ENCODE measurements at regions of chr20 and their contacts with region 1.

Region 1: GRCh38 chr20:3786665-3787323 is at the start of gene CENPB:
- DNase-seq: peak; percentile 79 to 94 (median 89)
- ATAC-seq: peak; percentile 85 to 88
- H3K4me3 Mint-ChIP-seq: peak within 1 kb of the TSS; percentile 68 to 89 (median 82)
- H3K27ac Mint-ChIP-seq: peak within 1 kb of the TSS in 8 of 10 donors; percentile 73 to 90 (median 85)
- H3K4me1 Mint-ChIP-seq: peaks cover 17 to 45% (median 38%) of the 10 kb centered on the region in 4 donors
- H3K27me3 Mint-ChIP-seq: no peaks in the 10 kb centered on the region
- polyA plus RNA-seq, gene CENPB: 1.0 to 1.7 (median 1.4) TPM

Region 2: GRCh38 chr20:3753981-3754630 is 32.7 kb before region 1 on chr20:
- POLR2A ChIA-PET with region 1: no interaction called
- DNase-seq: no peak
- ATAC-seq: no peak
- H3K4me3 Mint-ChIP-seq: no peak overlapping the region
- H3K27ac Mint-ChIP-seq: no peak overlapping the region
- H3K4me1 Mint-ChIP-seq: peaks cover 9 to 15% (median 14%) of the 10 kb centered on the region in 4 donors
- H3K27me3 Mint-ChIP-seq: no peaks in the 10 kb centered on the region

Region 3: DNA sequence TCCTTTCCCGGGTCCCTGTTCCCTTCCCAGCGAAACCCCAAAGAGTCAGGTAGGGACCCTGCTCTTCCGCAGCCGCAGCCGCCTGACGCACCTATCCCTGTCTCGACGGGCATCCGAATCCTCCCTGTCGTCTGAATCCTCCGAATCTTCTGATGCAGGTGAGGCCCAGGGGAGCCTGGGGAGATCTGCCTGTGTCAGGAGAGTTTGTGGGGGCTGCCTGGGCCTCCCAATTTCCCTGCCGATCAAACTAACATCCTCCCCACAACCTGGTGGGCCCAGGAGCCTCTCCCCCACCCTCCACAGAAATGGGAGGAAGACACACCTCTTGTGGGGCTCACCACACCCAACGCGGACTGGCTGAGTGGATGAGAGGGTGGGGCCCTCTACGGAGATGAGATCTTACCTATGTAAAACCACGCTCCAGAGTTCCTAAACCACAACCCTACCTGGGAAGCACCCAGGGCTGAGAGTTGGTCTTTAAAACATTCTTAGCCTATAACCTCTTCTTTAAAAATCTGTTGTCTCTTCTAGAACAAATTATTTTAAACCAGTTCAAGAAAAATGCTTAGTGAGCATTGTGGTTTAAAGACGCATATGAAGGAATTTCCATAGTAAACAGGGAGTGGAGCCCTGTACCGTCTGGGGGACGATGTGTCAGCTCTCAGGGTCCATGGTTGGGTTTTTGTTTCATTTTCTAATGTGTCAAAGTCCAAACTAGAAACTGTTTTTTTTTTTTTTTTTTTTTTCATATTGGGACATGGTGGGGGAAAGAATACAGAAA is 11.0 kb after region 1 on chr20:
- POLR2A ChIA-PET with region 1: interaction called, 34 read pairs
- DNase-seq: peak in 5 of 10 donors; percentile 31 to 74 (median 51)
- ATAC-seq: peak in 1 of 2 donors; percentile 31
- H3K4me3 Mint-ChIP-seq: peak overlapping the region; percentile 95 to 100 (median 98)
- H3K27ac Mint-ChIP-seq: peak overlapping the region; percentile 94 to 99 (median 97)
- H3K4me1 Mint-ChIP-seq: peaks cover 25 to 62% (median 61%) of the 10 kb centered on the region in 4 donors
- H3K27me3 Mint-ChIP-seq: no peaks in the 10 kb centered on the region

Region 4: DNA sequence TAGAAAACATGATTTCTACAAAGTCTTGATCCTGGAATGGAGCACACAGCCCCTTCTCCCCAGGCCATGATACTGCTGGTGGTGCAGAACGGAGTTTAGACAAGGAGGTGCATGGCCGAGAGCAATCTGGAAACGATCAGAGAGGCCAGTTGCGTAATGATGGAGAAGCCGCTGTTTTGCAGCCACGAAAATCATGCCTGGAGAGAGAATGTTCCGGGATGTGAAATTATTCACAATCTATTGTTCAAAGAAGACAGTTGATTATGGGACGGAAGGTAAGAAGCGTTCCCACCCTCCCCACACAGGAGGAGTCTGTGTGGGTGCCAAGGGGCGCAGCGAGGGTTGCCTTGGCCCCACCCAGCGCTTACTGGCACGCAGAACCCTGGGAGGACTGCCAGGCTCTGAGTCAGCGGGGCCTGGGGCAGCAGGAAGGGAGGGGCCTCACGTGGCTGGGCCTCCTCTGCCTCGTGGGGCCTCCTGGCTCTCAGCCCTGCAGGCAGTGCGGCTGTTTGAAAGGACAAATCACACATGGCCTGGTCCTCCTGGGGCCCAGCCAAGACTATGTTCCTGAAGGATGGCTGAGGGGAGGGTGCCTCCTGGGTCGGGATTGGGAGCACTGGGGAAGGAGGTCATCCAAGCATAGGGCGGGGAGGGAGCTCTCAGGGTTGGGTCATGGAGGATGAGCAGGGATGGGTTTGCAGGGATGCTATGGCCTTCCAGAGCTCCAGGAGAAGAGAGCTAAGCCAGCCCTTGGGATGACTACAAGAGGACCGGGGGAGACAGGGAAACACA is 24.9 kb after region 1 on chr20:
- POLR2A ChIA-PET with region 1: no interaction called
- DNase-seq: peak; percentile 84 to 98 (median 91)
- ATAC-seq: peak; percentile 86 to 91
- H3K4me3 Mint-ChIP-seq: peak overlapping the region; percentile 87 to 94 (median 90)
- H3K27ac Mint-ChIP-seq: peak overlapping the region; percentile 96 to 100 (median 98)
- H3K4me1 Mint-ChIP-seq: peaks cover 41 to 85% (median 78%) of the 10 kb centered on the region in 4 donors
- H3K27me3 Mint-ChIP-seq: no peaks in the 10 kb centered on the region

Measured in naive thymus-derived CD8-positive, alpha-beta T cell (primary cell).